GM10248 (cell line): ENCODE measurements at regions of chr11 and their contacts with region 1.

Region 1: GRCh38 chr11:64448599-64449556 is 89.9 kb downstream of the RPS6KA4 start:
- DNase-seq: peak; percentile 87
- CTCF ChIP-seq: peak; percentile 92

Region 2: GRCh38 chr11:64185816-64186498 is 262.9 kb before region 1 on chr11 and contains the start of gene STIP1:
- CTCF ChIA-PET with region 1: no interaction called
- POLR2A ChIA-PET with region 1: no interaction called
- DNase-seq: peak; percentile 97
- CTCF ChIP-seq: peak; percentile 22

Region 3: GRCh38 chr11:64341851-64342791 is 106.8 kb before region 1 on chr11:
- CTCF ChIA-PET with region 1: no interaction called
- POLR2A ChIA-PET with region 1: no interaction called
- DNase-seq: peak; percentile 95
- CTCF ChIP-seq: peak; percentile 28

Region 4: DNA sequence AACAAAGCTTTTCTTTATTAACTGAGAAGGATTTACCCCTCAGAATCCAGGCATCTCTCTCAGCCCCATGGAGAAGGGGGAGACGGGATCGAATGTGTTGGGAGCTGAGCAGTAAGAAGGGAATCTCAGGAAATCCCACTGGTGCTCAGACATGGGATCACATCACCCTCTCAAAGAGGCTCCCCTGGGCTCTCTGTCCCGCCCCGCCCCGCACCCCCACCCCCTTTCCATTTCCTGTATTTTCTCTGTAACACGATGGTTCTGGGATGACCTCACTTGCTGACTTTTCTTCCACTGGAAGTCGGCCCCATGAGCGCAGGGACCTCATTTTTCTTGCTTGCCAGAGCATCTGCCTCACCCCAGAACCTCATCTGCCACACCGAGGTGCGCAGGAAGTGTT is 10.1 kb after region 1 on chr11:
- CTCF ChIA-PET with region 1: interaction called, 19 read pairs
- POLR2A ChIA-PET with region 1: no interaction called
- DNase-seq: no peak
- CTCF ChIP-seq: no peak

Region 5: DNA sequence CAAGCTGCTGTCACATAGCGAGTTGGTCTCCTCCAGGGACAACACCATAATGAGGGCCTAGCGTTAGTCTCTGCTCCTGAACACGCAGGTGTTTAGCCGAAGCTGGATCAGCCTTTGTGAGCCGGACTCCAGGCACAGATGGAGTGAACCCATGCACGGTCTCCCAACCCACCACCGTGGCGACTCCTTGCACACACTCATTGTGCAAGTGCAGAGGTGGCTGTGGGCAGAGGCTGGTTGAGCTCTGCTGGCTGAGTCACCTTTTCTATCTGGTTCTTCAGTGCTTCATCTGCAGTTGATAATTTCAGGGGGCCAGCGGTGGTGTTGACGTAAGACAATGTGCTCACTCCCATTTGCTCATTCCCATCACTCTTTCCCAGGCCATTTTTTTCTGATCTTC is 70.0 kb after region 1 on chr11:
- CTCF ChIA-PET with region 1: interaction called, 12 read pairs
- POLR2A ChIA-PET with region 1: no interaction called
- DNase-seq: no peak
- CTCF ChIP-seq: no peak

Region 6: GRCh38 chr11:64652586-64653387 is 203.9 kb after region 1 on chr11:
- CTCF ChIA-PET with region 1: interaction called, 22 read pairs
- POLR2A ChIA-PET with region 1: no interaction called
- DNase-seq: peak; percentile 85
- CTCF ChIP-seq: peak; percentile 89

Region 7: GRCh38 chr11:64675450-64676260 is 226.8 kb after region 1 on chr11:
- CTCF ChIA-PET with region 1: interaction called, 16 read pairs
- POLR2A ChIA-PET with region 1: no interaction called
- DNase-seq: peak; percentile 60
- CTCF ChIP-seq: no peak